Calu3 (cell line): ENCODE measurements at regions of chr1 and their contacts with region 1.

Region 1: DNA sequence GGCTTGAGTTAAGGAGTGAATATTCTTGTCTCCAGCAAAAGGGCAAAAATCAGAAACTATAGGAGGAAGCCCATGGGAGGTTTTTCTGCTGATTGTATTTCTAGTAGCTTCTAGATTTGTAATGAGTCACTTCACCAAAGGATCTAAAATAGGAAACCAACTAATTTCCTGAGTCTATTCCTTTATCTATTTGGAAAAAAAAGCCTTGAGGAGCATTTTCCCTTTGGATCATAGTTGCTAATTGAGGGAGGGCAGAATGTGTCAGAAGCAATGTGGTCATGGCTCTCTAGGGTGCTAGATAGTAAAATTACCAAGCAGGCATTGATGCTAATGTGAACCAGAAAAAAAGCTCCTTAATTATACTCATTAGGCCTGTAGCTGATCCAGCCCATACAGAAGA is at the start of gene OR10R2:
- DNase-seq: no peak
- H3K4me3 Mint-ChIP-seq: no peak within 1 kb of the TSS
- H3K27ac Mint-ChIP-seq: no peak within 1 kb of the TSS
- H3K4me1 Mint-ChIP-seq: no peaks in the 10 kb centered on the region
- H3K27me3 Mint-ChIP-seq: peaks cover 34% of the 10 kb centered on the region
- CTCF ChIP-seq: no peak
- total RNA-seq, gene OR10R2: not detected in 2 replicates

Region 2: DNA sequence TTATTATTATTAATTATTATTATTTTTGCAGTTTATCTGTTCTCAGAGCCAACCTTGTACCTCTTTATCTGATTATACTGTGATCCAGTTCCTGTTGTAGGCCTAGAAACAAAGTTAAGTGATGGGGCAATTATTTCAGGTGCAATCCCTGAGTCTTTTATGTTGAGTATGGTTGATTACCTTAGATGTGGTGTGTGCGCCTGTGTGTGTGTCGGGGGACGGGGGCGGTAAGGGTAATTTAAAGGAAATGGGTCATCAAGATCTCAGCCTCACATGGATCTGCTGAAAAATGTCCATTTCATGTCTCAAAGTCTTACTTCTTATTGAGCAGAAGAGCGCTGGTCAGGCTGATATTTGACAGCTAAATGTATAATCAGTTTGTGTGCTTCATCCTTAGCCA is 64.8 kb before region 1 on chr1:
- CTCF ChIA-PET with region 1: no interaction called
- intact Hi-C with region 1: loop called (anchors 2 kb)
- DNase-seq: no peak
- H3K4me3 Mint-ChIP-seq: no peak overlapping the region
- H3K27ac Mint-ChIP-seq: no peak overlapping the region
- H3K4me1 Mint-ChIP-seq: no peaks in the 10 kb centered on the region
- H3K27me3 Mint-ChIP-seq: no peaks in the 10 kb centered on the region
- CTCF ChIP-seq: no peak